Psoas muscle (tissue), 8 donors: ENCODE measurements at regions of chr20 and their contacts with region 1.

Region 1: DNA sequence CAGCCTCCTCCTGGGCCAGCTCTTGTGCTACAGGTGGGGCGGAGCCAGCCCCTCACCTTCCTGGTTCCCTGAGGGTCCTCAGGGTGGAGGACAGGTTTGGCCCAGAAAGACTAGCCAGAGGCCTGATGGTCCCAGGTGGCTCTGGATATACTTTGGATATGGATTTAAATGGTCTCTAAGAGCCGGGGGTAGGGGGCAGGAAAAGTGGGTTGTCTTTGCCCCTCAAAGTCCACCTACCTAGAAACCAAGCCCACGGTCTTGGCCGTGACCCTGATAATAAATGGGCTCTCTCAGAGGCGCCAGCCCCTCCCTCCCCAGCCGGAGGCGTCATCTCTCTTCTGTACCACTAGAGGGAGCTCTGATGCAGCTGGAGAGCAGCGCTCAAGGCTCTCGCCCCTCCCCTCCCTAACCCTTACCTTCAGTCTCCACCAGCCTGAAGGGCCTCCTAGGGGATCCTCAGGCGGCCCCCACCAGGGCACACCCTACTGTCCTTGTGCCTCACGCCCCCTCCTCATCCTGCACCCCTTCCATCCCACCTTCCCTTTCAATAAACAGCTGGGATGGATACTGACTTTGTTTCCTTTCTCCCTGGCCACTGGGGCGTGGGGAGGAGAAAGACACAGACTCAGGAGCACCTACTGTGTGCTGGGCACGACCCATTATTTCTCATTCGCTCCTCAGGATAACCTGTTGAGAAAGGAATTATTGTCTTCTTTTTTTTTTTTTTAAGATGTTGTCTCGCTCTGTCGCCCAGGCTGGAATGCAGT is 7.6 kb downstream of the NRSN2 start:
- DNase-seq: peak; percentile 57 to 78
- ATAC-seq: peak; percentile 95 to 99 (median 96)
- H3K4me3 ChIP-seq: no peak overlapping the region
- H3K27ac ChIP-seq: no peak overlapping the region
- H3K4me1 ChIP-seq: peaks cover 5% of the 10 kb centered on the region
- H3K27me3 ChIP-seq: no peaks in the 10 kb centered on the region
- CTCF ChIP-seq: peak; percentile 96

Region 2: GRCh38 chr20:251354-251753 is 103.1 kb before region 1 on chr20:
- intact Hi-C with region 1: no loop called
- DNase-seq: no peak
- ATAC-seq: no peak
- H3K4me3 ChIP-seq: no peak overlapping the region
- H3K27ac ChIP-seq: no peak overlapping the region
- H3K4me1 ChIP-seq: no peaks in the 10 kb centered on the region
- H3K27me3 ChIP-seq: peaks cover 0 to 4% (median 0%) of the 10 kb centered on the region in 3 donors
- CTCF ChIP-seq: no peak

Region 3: GRCh38 chr20:431012-431904 is 76.8 kb after region 1 on chr20:
- intact Hi-C with region 1: loop called in 1 of 2 experiments (anchors 5 kb)
- DNase-seq: peak; percentile 53 to 79
- ATAC-seq: peak; percentile 66 to 84 (median 78)
- H3K4me3 ChIP-seq: no peak overlapping the region
- H3K27ac ChIP-seq: no peak overlapping the region
- H3K4me1 ChIP-seq: peaks cover 15% of the 10 kb centered on the region
- H3K27me3 ChIP-seq: no peaks in the 10 kb centered on the region
- CTCF ChIP-seq: peak; percentile 54

Region 4: GRCh38 chr20:478949-479429 is 124.5 kb after region 1 on chr20:
- intact Hi-C with region 1: loop called (anchors 1 to 2 kb)
- DNase-seq: no peak
- ATAC-seq: peak; percentile 48 to 70 (median 56)
- H3K4me3 ChIP-seq: no peak overlapping the region
- H3K27ac ChIP-seq: no peak overlapping the region
- H3K4me1 ChIP-seq: peaks cover 9% of the 10 kb centered on the region
- H3K27me3 ChIP-seq: no peaks in the 10 kb centered on the region
- CTCF ChIP-seq: peak; percentile 66

Region 5: DNA sequence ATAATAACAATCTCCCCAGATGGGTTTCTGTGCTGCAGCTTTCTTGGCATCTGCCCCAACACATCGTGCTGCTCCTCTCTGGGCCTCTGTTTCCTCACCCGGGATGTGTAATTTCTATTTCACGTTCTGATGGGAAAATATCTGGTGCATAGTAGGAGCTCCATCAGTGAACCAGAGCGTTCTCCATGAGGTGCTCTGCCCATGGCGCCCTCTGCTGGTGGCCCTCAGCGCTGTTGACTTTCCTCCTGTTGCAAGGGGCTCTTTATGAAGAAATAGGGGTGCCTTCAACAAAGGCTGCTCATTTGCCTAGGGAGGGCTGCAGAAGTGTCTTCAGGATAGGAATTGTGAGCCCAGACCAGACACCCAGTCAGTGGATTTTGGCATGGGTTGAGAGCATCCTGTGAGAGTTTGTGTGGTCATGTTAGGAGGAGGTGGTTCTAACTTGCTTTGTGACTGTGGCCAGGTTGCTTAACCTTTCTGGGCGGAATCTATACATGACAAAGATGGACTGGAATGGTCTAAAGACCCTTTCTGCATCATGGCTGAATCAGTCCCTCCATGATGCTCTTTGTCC is 313.0 kb after region 1 on chr20:
- intact Hi-C with region 1: loop called (anchors 10 kb)
- DNase-seq: peak; percentile 72 to 82
- ATAC-seq: peak; percentile 49 to 86 (median 76)
- H3K4me3 ChIP-seq: no peak overlapping the region
- H3K27ac ChIP-seq: no peak overlapping the region
- H3K4me1 ChIP-seq: peaks cover 14% of the 10 kb centered on the region
- H3K27me3 ChIP-seq: peaks cover 0 to 31% (median 16%) of the 10 kb centered on the region in 3 donors
- CTCF ChIP-seq: peak; percentile 74

Region 6: DNA sequence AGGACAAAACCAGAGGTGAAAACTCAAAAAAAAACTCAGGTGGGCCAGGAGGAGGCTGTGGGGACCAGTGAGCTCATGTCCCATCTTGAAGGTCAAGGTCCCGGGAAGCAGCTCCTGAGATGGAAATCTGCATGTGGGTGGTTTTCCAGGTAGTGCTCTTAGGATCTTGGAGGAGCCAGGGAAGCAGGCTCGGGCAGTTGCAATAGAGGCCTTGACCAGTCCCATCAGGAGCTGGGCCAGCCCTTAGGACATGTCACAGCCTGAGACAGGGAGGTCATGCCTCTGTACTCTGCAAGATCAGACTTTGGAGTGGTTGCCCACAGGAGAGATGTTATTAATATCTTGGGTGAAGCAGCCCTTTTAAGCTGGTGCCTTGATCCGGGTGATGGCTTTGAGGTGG is 382.4 kb after region 1 on chr20:
- intact Hi-C with region 1: loop called in 1 of 2 experiments (anchors 5 kb)
- DNase-seq: no peak
- ATAC-seq: no peak
- H3K4me3 ChIP-seq: no peak overlapping the region
- H3K27ac ChIP-seq: no peak overlapping the region
- H3K4me1 ChIP-seq: no peaks in the 10 kb centered on the region
- H3K27me3 ChIP-seq: peaks cover 0 to 2% (median 0%) of the 10 kb centered on the region in 3 donors
- CTCF ChIP-seq: no peak